Caco-2 (cell line): ENCODE measurements at regions of chr3 and their contacts with region 1.

Region 1: DNA sequence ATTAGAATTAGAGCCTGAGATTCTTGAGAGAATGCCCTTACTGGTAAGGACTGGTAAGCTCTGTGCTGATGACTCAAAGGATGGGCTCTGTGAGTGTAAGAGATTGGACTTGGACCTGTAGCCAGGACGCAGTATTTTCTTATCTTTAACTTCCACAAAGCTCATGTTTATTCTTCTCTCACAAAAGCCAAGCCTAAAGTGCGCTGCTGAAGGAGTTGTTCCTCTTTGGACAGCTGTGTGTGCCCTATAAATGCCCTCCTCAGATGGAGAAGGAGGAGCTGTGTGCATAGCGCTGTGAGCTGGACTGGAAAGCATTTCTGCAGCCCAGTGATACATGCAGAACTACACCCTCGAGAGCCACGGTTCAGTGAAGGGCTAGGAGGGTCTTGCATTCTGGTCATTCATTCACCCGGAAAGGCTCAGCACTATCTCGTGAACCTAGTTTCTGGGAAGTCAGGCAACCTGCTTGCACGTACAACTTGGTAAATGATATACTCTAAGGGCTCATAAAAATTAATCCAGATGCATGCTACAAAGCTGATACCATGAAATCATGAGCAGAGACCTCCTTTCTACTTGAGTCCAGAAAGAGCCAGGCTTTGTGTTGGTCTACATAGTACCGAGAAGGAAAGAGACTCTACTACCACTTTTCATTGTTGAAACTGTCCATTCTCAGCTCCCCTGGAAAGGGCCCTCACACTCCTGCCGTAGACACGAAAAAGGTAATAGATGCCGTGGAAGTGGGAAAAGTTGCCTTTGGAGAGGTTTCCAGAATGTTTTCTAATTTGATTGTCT is 103.0 kb upstream of the TBL1XR1 start:
- DNase-seq: peak; percentile 79 to 95
- H3K4me3 ChIP-seq: peak overlapping the region; percentile 34
- H3K4me3 Mint-ChIP-seq: peak overlapping the region; percentile 68
- H3K27ac Mint-ChIP-seq: peak overlapping the region; percentile 82
- H3K4me1 ChIP-seq: peaks cover 30% of the 10 kb centered on the region
- H3K4me1 Mint-ChIP-seq: peaks cover 6% of the 10 kb centered on the region
- H3K27me3 ChIP-seq: no peaks in the 10 kb centered on the region
- H3K27me3 Mint-ChIP-seq: no peaks in the 10 kb centered on the region
- CTCF ChIP-seq: no peak

Region 2: DNA sequence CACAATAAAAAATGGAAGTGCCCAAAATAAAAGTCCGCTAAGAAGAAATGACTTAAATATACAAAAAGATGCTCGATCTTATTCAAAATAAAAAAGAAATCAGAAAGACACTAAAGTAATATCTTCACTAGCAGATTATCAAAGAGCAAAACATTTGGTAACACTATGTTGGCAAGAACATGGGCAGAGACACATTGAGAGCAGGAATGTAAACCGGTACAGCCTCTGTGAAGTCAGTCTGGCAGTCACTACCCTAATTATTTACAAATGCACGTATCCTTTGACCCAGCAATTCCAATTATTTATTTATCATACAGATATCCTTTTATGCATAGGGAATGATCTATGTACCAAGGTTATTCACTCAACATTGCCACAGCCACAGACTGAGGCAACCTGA is 137.5 kb before region 1 on chr3:
- CTCF ChIA-PET with region 1: no interaction called
- POLR2A ChIA-PET with region 1: no interaction called
- intact Hi-C with region 1: no loop called
- DNase-seq: no peak
- H3K4me3 ChIP-seq: no peak overlapping the region
- H3K4me3 Mint-ChIP-seq: no peak overlapping the region
- H3K27ac Mint-ChIP-seq: no peak overlapping the region
- H3K4me1 ChIP-seq: 0 out of 2 replicates have a peak, but pooled peaks cover 2% of the 10 kb centered on the region
- H3K4me1 Mint-ChIP-seq: no peaks in the 10 kb centered on the region
- H3K27me3 ChIP-seq: no peaks in the 10 kb centered on the region
- H3K27me3 Mint-ChIP-seq: no peaks in the 10 kb centered on the region
- CTCF ChIP-seq: no peak

Region 3: GRCh38 chr3:177284383-177284881 is 15.8 kb before region 1 on chr3:
- CTCF ChIA-PET with region 1: no interaction called
- POLR2A ChIA-PET with region 1: no interaction called
- intact Hi-C with region 1: loop called (anchors 1 kb)
- DNase-seq: peak; percentile 43 to 58
- H3K4me3 ChIP-seq: no peak overlapping the region
- H3K4me3 Mint-ChIP-seq: no peak overlapping the region
- H3K27ac Mint-ChIP-seq: no peak overlapping the region
- H3K4me1 ChIP-seq: peaks cover 72% of the 10 kb centered on the region
- H3K4me1 Mint-ChIP-seq: peaks cover 22% of the 10 kb centered on the region
- H3K27me3 ChIP-seq: no peaks in the 10 kb centered on the region
- H3K27me3 Mint-ChIP-seq: no peaks in the 10 kb centered on the region
- CTCF ChIP-seq: no peak

Region 4: DNA sequence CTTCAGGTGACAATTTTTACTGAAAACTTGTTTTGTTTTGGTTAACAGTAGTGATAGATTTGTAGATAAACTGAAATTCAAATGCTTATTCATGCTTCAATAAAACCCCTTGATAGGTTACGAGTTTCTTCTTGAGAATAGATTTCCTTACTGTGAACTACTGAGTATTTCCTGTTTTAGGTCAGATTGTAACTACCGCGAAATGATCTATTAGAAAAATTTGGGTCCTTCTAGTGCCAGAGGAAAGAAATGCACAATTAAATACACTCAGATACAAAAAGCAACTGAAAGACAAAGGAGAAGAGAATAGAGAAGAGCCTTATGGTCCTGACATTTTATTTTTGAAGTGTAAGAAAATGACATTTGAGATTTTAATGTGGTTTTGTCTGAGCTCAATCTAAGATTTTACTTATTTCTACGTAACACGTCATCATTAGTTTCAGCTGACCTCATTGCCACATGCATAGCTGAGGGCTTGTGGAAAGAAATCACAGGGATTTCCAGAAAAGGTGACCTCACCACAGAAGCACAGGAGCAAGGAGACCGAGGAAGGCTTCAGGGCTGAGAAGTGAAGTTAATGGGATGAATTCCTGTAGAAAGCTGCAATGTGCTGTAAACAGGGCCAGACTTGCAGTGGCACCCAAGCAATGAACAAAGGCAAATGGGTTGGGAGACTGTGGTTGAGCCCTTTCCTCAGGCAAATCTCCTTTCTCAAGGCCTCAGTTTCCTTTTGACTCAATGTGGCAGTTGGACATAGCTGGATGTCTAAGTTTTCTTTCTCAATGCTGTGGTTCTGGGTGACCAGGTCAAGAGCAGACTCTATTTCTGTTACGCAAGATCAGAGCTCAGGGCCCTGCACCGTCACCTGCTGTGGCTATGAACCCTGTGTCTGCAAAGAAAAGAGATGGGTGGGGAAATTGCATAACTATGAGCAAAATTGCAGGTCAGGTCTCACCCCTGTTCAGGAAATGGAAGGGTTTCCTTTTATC is 149.0 kb after region 1 on chr3:
- CTCF ChIA-PET with region 1: no interaction called
- POLR2A ChIA-PET with region 1: no interaction called
- intact Hi-C with region 1: no loop called
- DNase-seq: no peak
- H3K4me3 ChIP-seq: no peak overlapping the region
- H3K4me3 Mint-ChIP-seq: no peak overlapping the region
- H3K27ac Mint-ChIP-seq: no peak overlapping the region
- H3K4me1 ChIP-seq: peaks cover 10% of the 10 kb centered on the region
- H3K4me1 Mint-ChIP-seq: no peaks in the 10 kb centered on the region
- H3K27me3 ChIP-seq: no peaks in the 10 kb centered on the region
- H3K27me3 Mint-ChIP-seq: no peaks in the 10 kb centered on the region
- CTCF ChIP-seq: no peak